CD8-positive, alpha-beta T cell (primary cell): ENCODE measurements at regions of chr14 and their contacts with region 1.

Region 1: GRCh38 chr14:69726761-69727511 is 40.0 kb upstream of the SRSF5 start:
- DNase-seq: peak; percentile 68 to 93 (median 84)
- ATAC-seq: peak; percentile 85
- H3K4me3 ChIP-seq: peak overlapping the region; percentile 48 to 60
- H3K4me3 Mint-ChIP-seq: peak overlapping the region; percentile 73
- H3K27ac ChIP-seq: peak overlapping the region in 1 of 2 experiments; percentile 50
- H3K27ac Mint-ChIP-seq: peak overlapping the region; percentile 76
- H3K4me1 ChIP-seq: peaks cover 12% of the 10 kb centered on the region
- H3K4me1 Mint-ChIP-seq: peaks cover 6% of the 10 kb centered on the region
- H3K27me3 ChIP-seq: no peaks in the 10 kb centered on the region
- H3K27me3 Mint-ChIP-seq: no peaks in the 10 kb centered on the region
- CTCF ChIP-seq: peak; percentile 95

Region 2: DNA sequence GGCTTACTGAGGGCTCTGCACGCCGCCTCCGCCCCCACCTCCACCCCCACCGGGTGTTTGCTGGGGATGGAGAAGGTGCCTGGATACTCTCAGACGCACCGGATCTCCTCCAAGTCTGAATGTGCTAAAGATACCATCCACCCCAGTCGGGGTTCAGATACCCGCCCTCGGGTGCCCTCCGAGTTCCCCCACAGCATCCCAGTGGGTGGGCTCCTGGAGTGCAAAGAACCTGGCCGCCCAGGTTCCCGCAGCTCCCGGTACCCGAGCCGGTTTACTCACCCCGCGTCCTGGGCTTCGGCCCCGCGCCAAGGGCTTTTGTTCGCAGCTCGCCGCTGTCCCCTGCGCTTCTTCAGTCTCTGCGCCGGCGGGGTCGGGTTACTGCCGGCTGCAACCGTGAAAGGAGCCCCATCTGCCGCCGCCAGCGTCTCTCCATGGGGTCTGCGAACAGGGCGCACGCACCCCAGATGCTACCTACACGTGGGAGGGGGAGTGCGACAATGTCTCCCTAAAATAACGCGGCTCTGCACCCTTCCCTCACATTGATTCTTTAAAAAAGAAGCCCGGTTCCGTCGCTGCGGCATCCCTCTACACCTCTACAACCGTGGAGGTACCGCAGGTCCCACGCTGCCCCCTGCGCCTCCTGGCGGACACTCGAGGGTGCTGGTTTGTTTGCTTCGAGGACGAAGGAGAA is 152.5 kb before region 1 on chr14 and contains the start of gene CCDC177:
- CTCF ChIA-PET with region 1: interaction called, 25 read pairs
- POLR2A ChIA-PET with region 1: no interaction called
- intact Hi-C with region 1: no loop called
- DNase-seq: peak; percentile 48 to 85 (median 74)
- ATAC-seq: peak; percentile 85
- H3K4me3 ChIP-seq: peak within 1 kb of the TSS; percentile 38 to 61
- H3K4me3 Mint-ChIP-seq: peak within 1 kb of the TSS; percentile 83
- H3K27ac ChIP-seq: no peak within 1 kb of the TSS
- H3K27ac Mint-ChIP-seq: no peak within 1 kb of the TSS
- H3K4me1 ChIP-seq: peaks cover 19% of the 10 kb centered on the region
- H3K4me1 Mint-ChIP-seq: peaks cover 12% of the 10 kb centered on the region
- H3K27me3 ChIP-seq: peaks cover 15 to 18% of the 10 kb centered on the region in 2 experiments
- H3K27me3 Mint-ChIP-seq: peaks cover 39% of the 10 kb centered on the region
- CTCF ChIP-seq: peak; percentile 96
- total RNA-seq, gene CCDC177: not detected

Region 3: DNA sequence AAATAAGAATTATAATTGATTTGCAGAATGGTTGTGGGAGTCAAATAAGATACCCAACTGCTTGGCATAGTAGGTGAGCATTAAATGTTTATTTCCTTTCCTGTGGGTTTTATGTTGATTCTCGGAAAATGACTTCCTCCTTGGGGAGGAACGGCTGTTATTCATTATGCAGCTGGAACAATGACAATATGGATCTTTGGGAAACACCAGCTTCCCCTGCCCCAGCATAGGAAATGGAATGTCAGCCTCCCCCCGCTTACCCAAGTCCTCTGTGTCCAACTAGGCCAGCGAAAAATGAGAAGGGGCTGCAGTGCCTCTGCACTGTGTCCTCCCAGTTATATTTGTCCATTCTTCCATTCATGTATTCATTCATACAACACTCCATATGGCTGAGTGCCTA is 140.5 kb before region 1 on chr14:
- CTCF ChIA-PET with region 1: interaction called, 71 read pairs
- POLR2A ChIA-PET with region 1: no interaction called
- intact Hi-C with region 1: loop called (anchors 1 kb)
- DNase-seq: no peak
- ATAC-seq: no peak
- H3K4me3 ChIP-seq: no peak overlapping the region
- H3K4me3 Mint-ChIP-seq: no peak overlapping the region
- H3K27ac ChIP-seq: no peak overlapping the region
- H3K27ac Mint-ChIP-seq: no peak overlapping the region
- H3K4me1 ChIP-seq: no peaks in the 10 kb centered on the region
- H3K4me1 Mint-ChIP-seq: no peaks in the 10 kb centered on the region
- H3K27me3 ChIP-seq: no peaks in the 10 kb centered on the region
- H3K27me3 Mint-ChIP-seq: peaks cover 5% of the 10 kb centered on the region
- CTCF ChIP-seq: no peak

Region 4: DNA sequence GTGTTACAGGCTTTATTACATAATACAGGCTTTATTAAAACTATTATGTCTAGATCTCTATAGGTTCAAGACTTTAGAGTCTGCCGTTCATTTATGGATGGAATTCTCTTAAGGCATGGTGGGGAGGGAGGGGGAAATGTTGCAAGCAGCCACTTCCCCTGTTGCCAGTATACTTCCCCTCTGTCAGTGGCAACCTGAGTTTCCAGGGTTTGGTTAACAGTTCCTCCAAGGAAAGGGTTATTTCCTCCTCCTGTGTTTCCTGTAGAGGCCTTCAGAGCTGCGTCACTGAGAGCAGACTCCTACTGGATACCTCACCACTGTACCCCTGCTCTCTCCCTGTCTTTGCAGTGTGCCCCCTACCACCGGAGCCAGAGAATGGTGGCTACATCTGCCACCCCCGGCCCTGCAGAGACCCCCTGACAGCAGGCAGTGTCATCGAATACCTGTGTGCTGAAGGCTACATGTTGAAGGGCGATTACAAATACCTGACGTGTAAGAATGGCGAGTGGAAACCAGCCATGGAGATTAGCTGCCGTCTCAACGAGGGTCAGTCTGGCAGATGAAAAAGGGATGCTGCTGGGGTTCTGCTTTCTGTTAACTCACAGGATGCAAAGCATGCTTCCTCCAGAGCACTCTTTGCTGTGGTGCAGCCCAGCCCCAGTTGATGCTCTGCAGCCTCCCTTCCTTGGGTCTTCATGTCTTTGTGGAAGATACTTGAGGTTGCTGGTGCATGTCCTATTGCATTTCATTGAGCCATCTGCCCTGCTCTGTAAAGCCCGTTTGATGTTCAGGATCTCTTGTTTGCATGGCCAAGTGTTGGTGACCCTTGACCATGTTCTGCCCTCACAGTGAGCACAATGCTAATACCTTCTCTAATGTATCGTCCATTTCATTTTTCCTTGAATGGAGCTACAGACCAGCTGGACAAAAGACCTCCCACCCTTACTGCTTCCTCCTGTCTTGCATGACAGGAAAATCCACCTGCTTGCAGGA is 23.6 kb before region 1 on chr14:
- CTCF ChIA-PET with region 1: interaction called, 11 read pairs
- POLR2A ChIA-PET with region 1: no interaction called
- intact Hi-C with region 1: no loop called
- DNase-seq: no peak
- ATAC-seq: no peak
- H3K4me3 ChIP-seq: no peak overlapping the region
- H3K4me3 Mint-ChIP-seq: no peak overlapping the region
- H3K27ac ChIP-seq: no peak overlapping the region
- H3K27ac Mint-ChIP-seq: peak overlapping the region; percentile 74
- H3K4me1 ChIP-seq: peaks cover 16% of the 10 kb centered on the region
- H3K4me1 Mint-ChIP-seq: peaks cover 44% of the 10 kb centered on the region
- H3K27me3 ChIP-seq: no peaks in the 10 kb centered on the region
- H3K27me3 Mint-ChIP-seq: no peaks in the 10 kb centered on the region
- CTCF ChIP-seq: no peak

Region 5: DNA sequence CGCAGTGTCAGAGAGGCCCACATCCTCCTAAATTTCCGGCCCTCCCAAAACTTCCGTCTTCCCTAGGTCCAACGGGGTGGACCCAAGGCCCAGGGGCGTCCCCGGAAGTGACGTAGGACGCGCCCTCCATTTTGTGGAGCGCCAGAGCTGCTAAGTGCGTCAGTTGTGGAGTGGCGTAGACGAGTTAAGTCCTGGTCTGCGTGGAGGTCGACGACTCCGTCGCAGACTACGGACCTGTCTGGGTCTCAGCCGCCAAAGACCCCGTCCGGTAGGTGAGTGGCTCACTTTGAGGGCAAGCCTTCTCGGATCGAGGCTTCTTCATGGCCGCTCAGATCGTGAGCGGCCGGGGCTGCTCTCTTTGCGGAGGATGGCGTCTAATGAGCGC is 40.0 kb after region 1 on chr14 and contains the start of gene SRSF5:
- CTCF ChIA-PET with region 1: interaction called, 5 read pairs
- POLR2A ChIA-PET with region 1: interaction called, 6 read pairs
- intact Hi-C with region 1: loop called in 1 of 2 experiments (anchors 1 kb)
- DNase-seq: peak; percentile 86 to 97 (median 96)
- ATAC-seq: peak; percentile 80
- H3K4me3 ChIP-seq: peak within 1 kb of the TSS; percentile 78 to 88
- H3K4me3 Mint-ChIP-seq: peak within 1 kb of the TSS; percentile 99
- H3K27ac ChIP-seq: peak within 1 kb of the TSS; percentile 97 to 99
- H3K27ac Mint-ChIP-seq: peak within 1 kb of the TSS; percentile 100
- H3K4me1 ChIP-seq: peaks cover 50% of the 10 kb centered on the region
- H3K4me1 Mint-ChIP-seq: peaks cover 67% of the 10 kb centered on the region
- H3K27me3 ChIP-seq: no peaks in the 10 kb centered on the region
- H3K27me3 Mint-ChIP-seq: no peaks in the 10 kb centered on the region
- CTCF ChIP-seq: no peak
- total RNA-seq, gene SRSF5: 1,544 to 1,597 TPM